Naive thymus-derived CD4-positive, alpha-beta T cell (primary cell): ENCODE measurements at regions of chr17 and their contacts with region 1.

Region 1: GRCh38 chr17:59786536-59787319 is 79.3 kb downstream of the VMP1 start:
- DNase-seq: peak in 8 of 9 donors; percentile 71 to 92 (median 86)
- ATAC-seq: peak; percentile 95
- H3K4me3 ChIP-seq: peak overlapping the region; percentile 29
- H3K4me3 Mint-ChIP-seq: peak overlapping the region; percentile 68 to 89 (median 82)
- H3K27ac ChIP-seq: peak overlapping the region; percentile 84
- H3K27ac Mint-ChIP-seq: peak overlapping the region; percentile 90 to 98 (median 96)
- H3K4me1 ChIP-seq: peaks cover 39% of the 10 kb centered on the region in 2 donors
- H3K4me1 Mint-ChIP-seq: peaks cover 21 to 62% (median 51%) of the 10 kb centered on the region in 7 donors
- H3K27me3 ChIP-seq: no peaks in the 10 kb centered on the region
- H3K27me3 Mint-ChIP-seq: peaks cover 0 to 3% (median 0%) of the 10 kb centered on the region in 5 donors

Region 2: DNA sequence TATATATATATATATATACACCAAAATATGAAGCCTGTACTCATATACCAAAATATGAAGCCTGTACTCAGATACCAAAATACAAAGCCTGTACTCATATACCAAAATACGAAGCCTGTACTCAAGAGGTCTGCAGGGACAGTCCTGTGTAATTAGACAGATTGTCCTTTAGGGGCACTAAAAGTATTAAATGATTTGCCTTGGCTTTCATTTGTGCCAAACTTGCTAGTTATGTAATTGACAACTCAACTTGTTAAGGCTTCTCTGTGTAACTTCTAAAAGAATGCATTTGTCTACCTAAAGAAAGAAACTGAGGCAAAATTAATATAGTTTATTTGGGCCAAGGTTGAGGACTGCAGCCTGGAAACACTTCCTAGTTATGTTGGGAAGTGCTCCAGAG is 252.1 kb before region 1 on chr17:
- CTCF ChIA-PET with region 1: no interaction called
- POLR2A ChIA-PET with region 1: no interaction called
- intact Hi-C with region 1: no loop called
- DNase-seq: no peak
- ATAC-seq: no peak
- H3K4me3 ChIP-seq: no peak overlapping the region
- H3K4me3 Mint-ChIP-seq: no peak overlapping the region
- H3K27ac ChIP-seq: no peak overlapping the region
- H3K27ac Mint-ChIP-seq: no peak overlapping the region
- H3K4me1 ChIP-seq: no peaks in the 10 kb centered on the region
- H3K4me1 Mint-ChIP-seq: peaks cover 0 to 5% (median 0%) of the 10 kb centered on the region in 7 donors
- H3K27me3 ChIP-seq: no peaks in the 10 kb centered on the region
- H3K27me3 Mint-ChIP-seq: peaks cover 0 to 23% (median 14%) of the 10 kb centered on the region in 5 donors

Region 3: GRCh38 chr17:59693582-59693981 is 93.1 kb before region 1 on chr17:
- CTCF ChIA-PET with region 1: no interaction called
- POLR2A ChIA-PET with region 1: no interaction called
- intact Hi-C with region 1: no loop called
- DNase-seq: no peak
- ATAC-seq: no peak
- H3K4me3 ChIP-seq: no peak overlapping the region
- H3K4me3 Mint-ChIP-seq: no peak overlapping the region
- H3K27ac ChIP-seq: no peak overlapping the region
- H3K27ac Mint-ChIP-seq: peak overlapping the region in 2 of 9 donors; percentile 33 to 62
- H3K4me1 ChIP-seq: no peaks in the 10 kb centered on the region
- H3K4me1 Mint-ChIP-seq: peaks cover 8 to 25% (median 14%) of the 10 kb centered on the region in 7 donors
- H3K27me3 ChIP-seq: no peaks in the 10 kb centered on the region
- H3K27me3 Mint-ChIP-seq: no peaks in the 10 kb centered on the region

Region 4: DNA sequence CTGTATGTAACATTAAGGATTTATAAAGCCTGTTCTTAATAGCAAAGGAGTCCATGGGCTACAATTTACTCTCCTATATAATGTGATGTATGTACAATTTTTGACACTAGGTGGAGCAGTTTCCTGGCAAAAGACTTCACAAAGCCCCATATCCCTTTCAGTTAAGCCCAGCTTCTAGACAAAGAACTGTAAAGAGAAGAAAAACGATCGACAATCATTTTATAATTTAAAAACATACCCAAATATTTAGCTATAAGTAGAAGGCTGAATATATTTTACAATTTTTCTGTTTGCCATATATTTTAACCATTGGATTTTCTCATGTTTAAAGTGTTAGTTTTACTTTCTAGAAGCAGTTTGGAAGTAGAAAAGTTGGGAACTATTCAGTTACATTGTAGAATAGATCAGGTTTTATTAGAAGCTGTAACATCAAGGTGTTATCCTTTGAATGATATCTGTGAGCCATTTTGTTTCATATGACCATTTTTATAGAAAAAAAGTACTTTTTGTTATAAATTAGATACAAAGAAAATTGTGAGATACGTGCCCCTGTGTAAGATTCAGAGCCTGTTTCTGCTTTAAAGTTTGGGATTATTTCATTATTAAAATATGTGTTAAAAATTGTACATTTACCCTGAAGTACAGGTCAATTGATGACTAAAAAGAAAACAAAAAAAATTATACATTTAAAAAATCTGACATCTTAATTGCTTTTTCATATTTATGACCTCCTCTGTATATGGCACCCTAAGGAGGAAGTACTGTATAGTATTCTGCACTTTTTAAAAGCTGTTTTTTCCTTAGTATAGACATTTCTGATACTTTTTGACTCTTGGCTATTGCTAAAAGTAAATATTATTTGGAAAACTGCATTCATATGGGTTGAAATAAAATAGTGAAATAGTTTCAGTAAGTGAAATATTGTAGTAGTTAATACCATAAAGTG is 32.9 kb before region 1 on chr17:
- CTCF ChIA-PET with region 1: interaction called, 7 read pairs
- POLR2A ChIA-PET with region 1: interaction called, 5 read pairs
- intact Hi-C with region 1: loop called (anchors 1 kb)
- DNase-seq: peak in 7 of 9 donors; percentile 48 to 79 (median 71)
- ATAC-seq: peak; percentile 98
- H3K4me3 ChIP-seq: peak overlapping the region; percentile 15
- H3K4me3 Mint-ChIP-seq: peak overlapping the region in 9 of 10 donors; percentile 16 to 75 (median 53)
- H3K27ac ChIP-seq: peak overlapping the region; percentile 47
- H3K27ac Mint-ChIP-seq: peak overlapping the region; percentile 36 to 94 (median 76)
- H3K4me1 ChIP-seq: peaks cover 0 to 5% of the 10 kb centered on the region in 2 donors
- H3K4me1 Mint-ChIP-seq: peaks cover 9 to 63% (median 24%) of the 10 kb centered on the region in 7 donors
- H3K27me3 ChIP-seq: no peaks in the 10 kb centered on the region
- H3K27me3 Mint-ChIP-seq: no peaks in the 10 kb centered on the region

Region 5: DNA sequence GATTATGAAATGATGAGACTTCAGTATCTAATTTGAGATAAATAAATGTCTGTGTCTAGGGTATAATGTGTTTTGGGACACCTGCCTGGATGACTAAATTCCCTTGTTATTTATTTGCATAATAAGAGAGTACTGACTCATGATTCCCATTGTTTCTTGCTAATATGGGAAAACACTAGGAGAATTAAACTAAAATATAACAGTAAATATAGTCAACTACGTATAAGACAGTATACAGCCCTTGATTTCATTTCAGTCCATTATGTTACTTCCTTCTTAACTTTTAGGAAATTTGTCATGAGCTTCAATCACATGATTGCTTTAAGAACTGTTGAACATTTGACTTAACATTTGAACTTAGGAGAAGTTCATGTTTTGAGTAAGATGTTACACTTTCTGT is 16.8 kb before region 1 on chr17:
- CTCF ChIA-PET with region 1: no interaction called
- POLR2A ChIA-PET with region 1: no interaction called
- intact Hi-C with region 1: loop called in 1 of 2 experiments (anchors 1 kb)
- DNase-seq: no peak
- ATAC-seq: no peak
- H3K4me3 ChIP-seq: no peak overlapping the region
- H3K4me3 Mint-ChIP-seq: peak overlapping the region in 1 of 10 donors; percentile 33
- H3K27ac ChIP-seq: no peak overlapping the region
- H3K27ac Mint-ChIP-seq: peak overlapping the region in 1 of 9 donors; percentile 24
- H3K4me1 ChIP-seq: no peaks in the 10 kb centered on the region
- H3K4me1 Mint-ChIP-seq: peaks cover 0 to 28% (median 0%) of the 10 kb centered on the region in 7 donors
- H3K27me3 ChIP-seq: no peaks in the 10 kb centered on the region
- H3K27me3 Mint-ChIP-seq: no peaks in the 10 kb centered on the region

Region 6: DNA sequence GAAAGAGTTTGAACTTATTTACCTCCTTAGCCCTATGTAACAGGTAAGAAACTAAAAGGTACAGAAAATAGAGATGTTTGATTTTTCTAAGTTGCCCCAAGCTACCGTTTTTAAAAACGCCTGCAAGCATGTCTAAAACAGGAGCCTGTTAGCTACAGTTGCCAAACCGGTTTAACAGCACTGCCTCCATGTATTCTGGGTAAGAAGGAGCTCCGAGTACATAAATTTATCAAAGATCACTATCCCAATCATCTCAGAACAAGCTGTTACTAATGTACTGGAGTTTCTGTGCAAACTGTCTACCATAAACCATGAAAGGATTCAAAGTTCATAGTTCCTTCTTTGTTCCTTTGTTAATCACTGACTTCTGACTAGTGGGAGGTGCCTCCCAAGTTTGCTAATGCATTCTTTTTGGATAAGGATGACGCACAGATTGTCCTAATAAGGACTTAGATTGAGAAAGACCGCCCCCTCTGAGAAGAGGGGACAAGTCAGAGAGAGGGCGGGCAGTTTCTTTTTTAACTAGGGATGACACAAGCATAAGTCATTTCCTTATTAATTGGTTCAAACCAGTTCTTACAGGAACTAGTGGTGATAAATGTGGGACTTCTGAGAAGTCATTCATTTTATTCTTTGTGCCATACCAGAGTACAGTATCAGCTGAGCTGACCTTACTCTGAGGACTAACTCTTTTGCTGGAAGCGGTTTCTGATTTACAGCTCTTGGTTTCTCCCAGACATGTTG is 50.8 kb after region 1 on chr17:
- CTCF ChIA-PET with region 1: no interaction called
- POLR2A ChIA-PET with region 1: interaction called, 7 read pairs
- intact Hi-C with region 1: loop called (anchors 1 kb)
- DNase-seq: peak in 8 of 9 donors; percentile 51 to 91 (median 74)
- ATAC-seq: peak; percentile 94
- H3K4me3 ChIP-seq: peak overlapping the region; percentile 72
- H3K4me3 Mint-ChIP-seq: peak overlapping the region; percentile 83 to 100 (median 95)
- H3K27ac ChIP-seq: peak overlapping the region; percentile 88
- H3K27ac Mint-ChIP-seq: peak overlapping the region; percentile 90 to 99 (median 96)
- H3K4me1 ChIP-seq: peaks cover 6 to 14% of the 10 kb centered on the region in 2 donors
- H3K4me1 Mint-ChIP-seq: peaks cover 14 to 69% (median 49%) of the 10 kb centered on the region in 7 donors
- H3K27me3 ChIP-seq: no peaks in the 10 kb centered on the region
- H3K27me3 Mint-ChIP-seq: peaks cover 0 to 17% (median 0%) of the 10 kb centered on the region in 5 donors

Region 7: DNA sequence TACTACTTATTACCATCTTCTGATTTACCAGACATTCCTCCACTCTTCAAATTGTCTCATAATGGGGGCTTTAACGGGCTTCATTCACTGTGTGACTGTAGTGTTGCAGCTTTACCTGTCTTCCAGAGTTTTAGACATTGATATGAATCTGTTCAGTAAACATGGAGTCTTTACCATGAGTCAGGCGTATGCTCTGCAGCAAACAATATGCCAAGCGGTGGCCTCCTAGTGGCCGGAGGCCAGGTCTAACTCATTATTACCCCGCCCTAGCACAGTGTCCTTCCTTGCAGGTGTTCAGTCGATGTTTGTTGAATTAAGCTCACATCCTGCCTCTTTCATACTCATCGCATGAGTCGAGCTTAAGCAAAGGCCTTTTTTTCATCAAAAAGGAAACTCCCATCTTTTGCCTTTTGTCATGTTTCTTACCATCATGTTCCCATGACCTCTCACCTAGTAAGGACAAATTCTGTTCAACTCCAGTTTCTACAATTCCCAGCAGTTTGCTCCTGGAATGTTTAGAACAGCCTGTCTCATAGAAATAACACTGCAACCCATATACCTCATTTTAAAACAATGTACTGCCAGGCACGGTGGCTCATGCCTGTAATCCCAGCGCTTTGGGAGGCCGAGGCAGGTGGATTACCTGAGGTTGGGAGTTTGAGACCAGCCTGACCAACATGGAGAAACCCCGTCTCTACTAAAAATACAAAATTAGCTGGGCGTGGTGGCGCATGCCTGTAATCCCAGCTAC is 66.6 kb after region 1 on chr17:
- CTCF ChIA-PET with region 1: no interaction called
- POLR2A ChIA-PET with region 1: no interaction called
- intact Hi-C with region 1: loop called in 1 of 2 experiments (anchors 1 kb)
- DNase-seq: peak in 4 of 9 donors; percentile 29 to 43 (median 34)
- ATAC-seq: peak; percentile 83
- H3K4me3 ChIP-seq: no peak overlapping the region
- H3K4me3 Mint-ChIP-seq: peak overlapping the region in 8 of 10 donors; percentile 3 to 41 (median 28)
- H3K27ac ChIP-seq: no peak overlapping the region
- H3K27ac Mint-ChIP-seq: peak overlapping the region in 8 of 9 donors; percentile 1 to 93 (median 76)
- H3K4me1 ChIP-seq: peaks cover 5 to 24% of the 10 kb centered on the region in 2 donors
- H3K4me1 Mint-ChIP-seq: peaks cover 25 to 51% (median 31%) of the 10 kb centered on the region in 7 donors
- H3K27me3 ChIP-seq: no peaks in the 10 kb centered on the region
- H3K27me3 Mint-ChIP-seq: no peaks in the 10 kb centered on the region

Region 8: GRCh38 chr17:59963738-59964481 is 177.2 kb after region 1 on chr17:
- CTCF ChIA-PET with region 1: no interaction called
- POLR2A ChIA-PET with region 1: no interaction called
- intact Hi-C with region 1: no loop called
- DNase-seq: peak in 2 of 9 donors; percentile 56 to 62
- ATAC-seq: peak; percentile 67
- H3K4me3 ChIP-seq: peak overlapping the region; percentile 92
- H3K4me3 Mint-ChIP-seq: peak overlapping the region; percentile 86 to 99 (median 94)
- H3K27ac ChIP-seq: peak overlapping the region; percentile 84
- H3K27ac Mint-ChIP-seq: peak overlapping the region; percentile 88 to 99 (median 94)
- H3K4me1 ChIP-seq: peaks cover 16 to 18% of the 10 kb centered on the region in 2 donors
- H3K4me1 Mint-ChIP-seq: peaks cover 20 to 38% (median 27%) of the 10 kb centered on the region in 7 donors
- H3K27me3 ChIP-seq: no peaks in the 10 kb centered on the region
- H3K27me3 Mint-ChIP-seq: peaks cover 0 to under 1% (median 0%) of the 10 kb centered on the region in 5 donors